IMR-90 (cell line): ENCODE measurements at regions of chr6 and their contacts with region 1.

Region 1: GRCh38 chr6:27188885-27189418 is 58.5 kb upstream of the PRSS16 start:
- DNase-seq: peak; percentile 83
- ATAC-seq: peak; percentile 88
- H3K4me3 ChIP-seq: peak overlapping the region; percentile 66
- H3K27ac ChIP-seq: peak overlapping the region; percentile 88
- H3K4me1 ChIP-seq: peaks cover 1% of the 10 kb centered on the region; the same call in 1 of the 2 replicates
- H3K27me3 ChIP-seq: no peaks in the 10 kb centered on the region
- CTCF ChIP-seq: peak; percentile 78
- POLR2A ChIP-seq: no peak
- RAD21 ChIP-seq: peak; percentile 83

Region 2: GRCh38 chr6:27126815-27127537 is 62.0 kb before region 1 on chr6:
- CTCF ChIA-PET with region 1: no interaction called
- POLR2A ChIA-PET with region 1: no interaction called
- dilution Hi-C with region 1: no loop called
- in situ Hi-C with region 1: no loop called
- intact Hi-C with region 1: loop called (anchors 1 kb)
- DNase-seq: peak; percentile 90
- ATAC-seq: peak; percentile 93
- H3K4me3 ChIP-seq: peak overlapping the region; percentile 32; the same call in 1 of the 2 replicates
- H3K27ac ChIP-seq: peak overlapping the region; percentile 36
- H3K4me1 ChIP-seq: peaks cover 2% of the 10 kb centered on the region; the same call in 1 of the 2 replicates
- H3K27me3 ChIP-seq: no peaks in the 10 kb centered on the region
- CTCF ChIP-seq: peak; percentile 98
- POLR2A ChIP-seq: 0 out of 2 replicates have a peak, but pooled peaks have one; percentile 20
- RAD21 ChIP-seq: peak; percentile 81

Region 3: GRCh38 chr6:27177485-27178406 is 11.2 kb before region 1 on chr6:
- CTCF ChIA-PET with region 1: interaction called, 3 read pairs
- POLR2A ChIA-PET with region 1: no interaction called
- dilution Hi-C with region 1: no loop called
- in situ Hi-C with region 1: no loop called
- intact Hi-C with region 1: loop called (anchors 1 kb)
- DNase-seq: peak; percentile 94
- ATAC-seq: peak; percentile 92
- H3K4me3 ChIP-seq: peak overlapping the region; percentile 95
- H3K27ac ChIP-seq: peak overlapping the region; percentile 91
- H3K4me1 ChIP-seq: 0 out of 2 replicates have a peak, but pooled peaks cover 1% of the 10 kb centered on the region
- H3K27me3 ChIP-seq: no peaks in the 10 kb centered on the region
- CTCF ChIP-seq: peak; percentile 59
- POLR2A ChIP-seq: peak; percentile 73; the same call in 1 of the 2 replicates
- RAD21 ChIP-seq: peak; percentile 55

Region 4: GRCh38 chr6:27392481-27393022 is 203.6 kb after region 1 on chr6:
- CTCF ChIA-PET with region 1: no interaction called
- POLR2A ChIA-PET with region 1: no interaction called
- dilution Hi-C with region 1: no loop called
- in situ Hi-C with region 1: no loop called
- intact Hi-C with region 1: no loop called
- DNase-seq: no peak
- ATAC-seq: no peak
- H3K4me3 ChIP-seq: no peak overlapping the region
- H3K27ac ChIP-seq: no peak overlapping the region
- H3K4me1 ChIP-seq: no peaks in the 10 kb centered on the region
- H3K27me3 ChIP-seq: no peaks in the 10 kb centered on the region
- CTCF ChIP-seq: no peak
- POLR2A ChIP-seq: no peak
- RAD21 ChIP-seq: no peak

Region 5: GRCh38 chr6:27518881-27519795 is 330.2 kb after region 1 on chr6:
- CTCF ChIA-PET with region 1: no interaction called
- POLR2A ChIA-PET with region 1: no interaction called
- dilution Hi-C with region 1: no loop called
- in situ Hi-C with region 1: no loop called
- intact Hi-C with region 1: loop called (anchors 2 kb)
- DNase-seq: peak; percentile 90
- ATAC-seq: peak; percentile 87
- H3K4me3 ChIP-seq: peak overlapping the region; percentile 74
- H3K27ac ChIP-seq: peak overlapping the region; percentile 76
- H3K4me1 ChIP-seq: peaks cover 2% of the 10 kb centered on the region; the same call in 1 of the 2 replicates
- H3K27me3 ChIP-seq: peaks cover 2% of the 10 kb centered on the region
- CTCF ChIP-seq: peak; percentile 72
- POLR2A ChIP-seq: no peak
- RAD21 ChIP-seq: peak; percentile 55

Region 6: GRCh38 chr6:27687154-27688013 is 498.4 kb after region 1 on chr6:
- CTCF ChIA-PET with region 1: no interaction called
- POLR2A ChIA-PET with region 1: interaction called, 3 read pairs
- dilution Hi-C with region 1: no loop called
- in situ Hi-C with region 1: no loop called
- intact Hi-C with region 1: loop called (anchors 1 kb)
- DNase-seq: peak; percentile 62
- ATAC-seq: peak; percentile 85
- H3K4me3 ChIP-seq: peak overlapping the region; percentile 55
- H3K27ac ChIP-seq: no peak overlapping the region
- H3K4me1 ChIP-seq: no peaks in the 10 kb centered on the region
- H3K27me3 ChIP-seq: no peaks in the 10 kb centered on the region
- CTCF ChIP-seq: peak; percentile 63
- POLR2A ChIP-seq: no peak
- RAD21 ChIP-seq: peak; percentile 54